ENCODE measurements at regions of chr17 and their contacts with region 1.

Region 1: GRCh38 chr17:4997302-4998026 is at the starts of genes INCA1 and KIF1C:
- DNase-seq: peak; percentile 42
- ATAC-seq: peak; percentile 93
- H3K4me3 ChIP-seq: peak within 1 kb of the TSS; percentile 99
- H3K27ac ChIP-seq: peak within 1 kb of the TSS; percentile 80
- H3K4me1 ChIP-seq: peaks cover 11% of the 10 kb centered on the region
- H3K27me3 ChIP-seq: no peaks in the 10 kb centered on the region
- CTCF ChIP-seq: no peak
- EP300 ChIP-seq: no peak
- POLR2A ChIP-seq: peak; percentile 70
- RAD21 ChIP-seq: no peak
- polyA plus RNA-seq, gene INCA1: 0.61 to 0.64 TPM
- polyA plus RNA-seq, gene KIF1C: 1.4 to 1.5 TPM

Region 2: DNA sequence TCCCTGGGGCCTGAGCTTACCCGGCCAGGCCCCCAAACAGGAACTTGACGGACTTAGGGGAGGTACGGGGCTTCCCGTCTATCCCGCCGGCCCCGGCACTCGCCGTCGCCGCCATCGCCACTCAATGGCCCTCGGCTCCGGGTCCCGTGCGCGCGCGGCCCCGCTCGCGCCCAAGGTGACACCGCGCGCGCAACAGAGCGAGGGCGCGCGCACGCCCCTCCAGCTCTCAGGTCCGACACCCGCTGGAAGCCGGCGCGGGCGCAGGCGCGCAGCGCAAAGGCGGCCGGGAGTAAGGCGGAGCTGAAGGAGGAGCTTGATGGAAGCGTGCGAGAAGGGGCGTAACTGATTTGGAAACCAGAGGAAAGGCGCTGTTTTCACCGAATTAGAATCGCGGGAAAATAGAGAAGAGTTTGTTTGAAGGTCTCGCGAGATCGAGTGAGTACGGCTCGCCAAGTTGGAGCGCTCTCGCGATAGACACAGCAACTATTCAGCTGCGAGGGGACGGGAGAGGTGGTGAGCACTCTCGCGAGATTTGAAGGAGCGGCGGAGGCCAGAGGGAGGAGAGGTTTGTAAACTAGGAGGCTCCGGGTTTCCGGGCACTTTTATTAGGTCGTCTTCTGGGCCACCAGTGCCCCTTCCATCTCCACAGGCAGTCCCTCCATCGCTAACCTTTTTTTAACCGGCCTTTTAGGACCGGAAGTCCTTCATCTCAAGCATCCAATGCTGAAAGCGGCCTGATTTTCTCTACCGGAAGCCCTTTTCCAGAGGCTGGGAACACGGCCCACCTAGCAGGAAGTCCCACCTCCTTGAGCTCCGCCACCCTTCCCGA is 57.5 kb before region 1 on chr17 and contains the starts of genes RNF167 and SLC25A11:
- CTCF ChIA-PET with region 1: no interaction called
- POLR2A ChIA-PET with region 1: interaction called, 11 read pairs
- RAD21 ChIA-PET with region 1: interaction called, 8 read pairs
- SMC1A ChIA-PET with region 1: interaction called, 3 read pairs
- in situ Hi-C with region 1: no loop called
- intact Hi-C with region 1: no loop called
- DNase-seq: peak; percentile 100
- ATAC-seq: peak; percentile 83
- H3K4me3 ChIP-seq: peak within 1 kb of the TSS; percentile 92
- H3K27ac ChIP-seq: peak within 1 kb of the TSS; percentile 97
- H3K4me1 ChIP-seq: peaks cover 41% of the 10 kb centered on the region
- H3K27me3 ChIP-seq: no peaks in the 10 kb centered on the region
- CTCF ChIP-seq: no peak
- EP300 ChIP-seq: no peak
- POLR2A ChIP-seq: peak; percentile 88
- RAD21 ChIP-seq: no peak
- polyA plus RNA-seq, gene RNF167: 33.6 to 35.3 TPM
- polyA plus RNA-seq, gene SLC25A11: 5.8 to 10.9 TPM

Region 3: GRCh38 chr17:4948931-4949320 is 48.5 kb before region 1 on chr17:
- CTCF ChIA-PET with region 1: no interaction called
- POLR2A ChIA-PET with region 1: interaction called, 5 read pairs
- RAD21 ChIA-PET with region 1: no interaction called
- SMC1A ChIA-PET with region 1: no interaction called
- in situ Hi-C with region 1: no loop called
- intact Hi-C with region 1: loop called (anchors 2 kb)
- DNase-seq: no peak
- ATAC-seq: peak; percentile 51
- H3K4me3 ChIP-seq: peak overlapping the region; percentile 96
- H3K27ac ChIP-seq: peak overlapping the region; percentile 85
- H3K4me1 ChIP-seq: peaks cover 33% of the 10 kb centered on the region
- H3K27me3 ChIP-seq: no peaks in the 10 kb centered on the region
- CTCF ChIP-seq: no peak
- EP300 ChIP-seq: no peak
- POLR2A ChIP-seq: no peak
- RAD21 ChIP-seq: no peak

Region 4: DNA sequence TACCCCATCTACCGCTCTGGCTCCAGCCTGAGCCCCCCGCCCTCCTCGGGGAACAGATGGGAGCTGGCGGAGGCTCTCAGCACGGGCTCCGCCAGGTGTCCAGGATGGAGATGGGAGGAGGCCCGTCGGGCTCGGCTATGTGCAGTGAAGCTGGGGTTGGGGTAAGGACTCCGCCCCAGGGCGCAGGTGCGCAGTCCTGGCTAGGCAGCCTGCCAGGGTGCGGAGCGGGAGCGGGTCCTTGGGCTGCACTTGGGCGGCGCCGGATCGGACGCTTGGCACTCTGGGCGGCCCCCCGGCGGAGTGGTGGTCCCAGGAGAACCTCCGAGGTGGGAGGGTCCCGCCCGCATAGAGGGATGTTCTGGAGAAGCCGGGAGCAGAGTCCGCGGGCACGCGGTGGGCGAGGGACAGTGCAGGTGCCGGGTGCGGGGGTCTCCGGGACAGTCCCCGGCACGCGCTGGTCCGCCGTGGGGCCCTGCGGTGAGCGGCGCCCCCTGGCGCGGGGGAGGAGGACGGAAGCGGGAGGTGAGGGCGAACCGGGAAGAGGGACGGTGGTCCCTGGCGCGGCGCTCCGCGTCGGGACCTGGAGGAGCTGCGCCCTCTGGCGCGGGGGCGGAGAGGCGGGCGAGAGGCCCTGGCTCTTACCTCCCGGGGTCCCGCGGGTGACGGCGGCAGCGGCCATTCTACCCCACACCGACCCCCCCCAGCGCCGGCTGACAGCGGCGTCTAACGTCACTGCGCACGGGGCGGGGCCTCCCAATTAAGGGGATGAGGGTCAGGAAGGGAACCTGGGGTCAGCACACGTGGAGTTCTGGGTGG is 10.3 kb before region 1 on chr17 and contains the start of gene CAMTA2:
- CTCF ChIA-PET with region 1: interaction called, 5 read pairs
- POLR2A ChIA-PET with region 1: interaction called, 22 read pairs
- RAD21 ChIA-PET with region 1: interaction called, 15 read pairs
- SMC1A ChIA-PET with region 1: interaction called, 10 read pairs
- in situ Hi-C with region 1: no loop called
- intact Hi-C with region 1: no loop called
- DNase-seq: no peak
- ATAC-seq: peak; percentile 92
- H3K4me3 ChIP-seq: peak within 1 kb of the TSS; percentile 74
- H3K27ac ChIP-seq: peak within 1 kb of the TSS; percentile 90
- H3K4me1 ChIP-seq: peaks cover 19% of the 10 kb centered on the region
- H3K27me3 ChIP-seq: no peaks in the 10 kb centered on the region
- CTCF ChIP-seq: peak; percentile 61 to 66 (median 66); a peak in 5 of 6 replicates
- EP300 ChIP-seq: no peak
- POLR2A ChIP-seq: peak; percentile 89
- RAD21 ChIP-seq: peak; percentile 33
- polyA plus RNA-seq, gene CAMTA2: 0.42 to 1.7 TPM

Region 5: DNA sequence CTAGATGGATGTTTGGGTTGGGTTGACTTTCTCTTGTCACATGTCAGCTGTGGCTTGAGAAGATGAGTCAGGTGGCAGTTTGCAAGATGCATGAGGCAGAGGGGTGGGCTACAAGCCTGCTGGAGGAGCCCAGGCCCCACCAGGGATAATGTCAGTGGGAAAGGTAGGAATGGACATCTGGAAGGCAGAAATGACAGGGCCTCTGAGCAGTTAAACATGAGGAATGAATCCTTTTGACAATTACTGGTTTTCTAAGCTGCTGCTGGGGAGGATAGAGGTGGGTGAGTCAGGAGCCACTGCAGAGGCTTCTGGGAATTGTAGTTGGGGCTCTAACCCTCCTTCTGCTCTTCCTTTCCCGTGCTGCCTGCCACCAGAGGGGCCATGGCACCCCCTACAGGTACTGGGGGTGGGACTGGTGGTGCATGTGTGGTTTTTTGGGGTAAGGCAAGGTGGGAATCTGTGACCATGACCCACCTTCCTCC is 22.1 kb after region 1 on chr17:
- CTCF ChIA-PET with region 1: no interaction called
- POLR2A ChIA-PET with region 1: interaction called, 9 read pairs
- RAD21 ChIA-PET with region 1: interaction called, 4 read pairs
- SMC1A ChIA-PET with region 1: no interaction called
- in situ Hi-C with region 1: no loop called
- intact Hi-C with region 1: loop called (anchors 2 kb)
- DNase-seq: no peak
- ATAC-seq: peak; percentile 24; the same call in 1 of the 3 replicates
- H3K4me3 ChIP-seq: no peak overlapping the region
- H3K27ac ChIP-seq: no peak overlapping the region
- H3K4me1 ChIP-seq: peaks cover 12% of the 10 kb centered on the region
- H3K27me3 ChIP-seq: no peaks in the 10 kb centered on the region
- CTCF ChIP-seq: peak; percentile 25 to 40 (median 31); a peak in 4 of 6 replicates
- EP300 ChIP-seq: no peak
- POLR2A ChIP-seq: no peak
- RAD21 ChIP-seq: peak; percentile 51

Region 6: GRCh38 chr17:5031365-5032082 is 34.1 kb after region 1 on chr17:
- CTCF ChIA-PET with region 1: interaction called, 6 read pairs
- POLR2A ChIA-PET with region 1: interaction called, 9 read pairs
- RAD21 ChIA-PET with region 1: interaction called, 5 read pairs
- SMC1A ChIA-PET with region 1: interaction called, 7 read pairs
- in situ Hi-C with region 1: no loop called
- intact Hi-C with region 1: loop called (anchors 5 kb)
- DNase-seq: peak; percentile 55
- ATAC-seq: peak; percentile 92
- H3K4me3 ChIP-seq: peak overlapping the region; percentile 46
- H3K27ac ChIP-seq: peak overlapping the region; percentile 66
- H3K4me1 ChIP-seq: peaks cover 14% of the 10 kb centered on the region
- H3K27me3 ChIP-seq: no peaks in the 10 kb centered on the region
- CTCF ChIP-seq: peak; percentile 67 to 81 (median 69)
- EP300 ChIP-seq: no peak
- POLR2A ChIP-seq: no peak; the same call in 1 of the 2 replicates
- RAD21 ChIP-seq: peak; percentile 70